Activated CD4-positive, alpha-beta memory T cell treated with anti-CD3 and anti-CD28 coated beads for 36 hours (primary cell): ENCODE measurements at regions of chr2 and their contacts with region 1.

Region 1: DNA sequence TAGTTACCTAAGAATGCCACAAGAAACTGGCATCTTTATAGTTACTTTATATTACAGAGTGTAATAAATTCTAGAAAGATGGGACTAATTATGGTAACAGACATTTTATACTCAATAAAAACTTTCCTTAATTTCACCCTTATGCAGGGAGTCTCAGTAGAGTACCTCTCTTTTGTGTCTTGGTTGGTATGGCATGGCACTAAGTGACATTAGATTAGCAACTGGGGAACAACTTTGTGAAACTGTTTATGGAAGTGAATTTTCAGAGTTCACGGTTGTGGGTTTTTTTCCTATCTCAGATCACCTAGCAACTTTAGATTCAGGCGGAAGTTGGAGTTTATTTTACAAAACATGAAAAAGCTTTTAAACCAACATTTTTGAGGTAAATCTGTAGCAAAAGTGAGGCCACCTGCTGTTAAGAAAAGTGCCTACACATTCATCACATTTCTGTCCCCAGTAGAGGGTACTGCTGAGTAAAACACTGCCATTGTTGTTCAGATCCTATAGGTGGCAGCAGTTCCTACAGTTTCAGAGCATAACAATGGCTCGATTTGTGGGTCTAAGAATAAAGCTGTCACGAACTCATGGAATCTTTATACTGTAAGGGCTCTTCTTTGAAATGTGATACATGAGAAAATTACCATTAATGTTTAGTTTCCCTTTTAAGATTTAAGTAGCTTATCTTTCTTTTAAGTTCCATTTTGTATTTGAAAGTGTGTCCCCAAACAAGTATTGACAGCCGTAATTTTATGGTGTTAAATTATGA is 117.6 kb downstream of the CAMKMT start:
- DNase-seq: peak; percentile 19
- H3K4me3 Mint-ChIP-seq: no peak overlapping the region
- H3K27ac Mint-ChIP-seq: no peak overlapping the region
- H3K4me1 Mint-ChIP-seq: peaks cover 2% of the 10 kb centered on the region
- H3K27me3 Mint-ChIP-seq: no peaks in the 10 kb centered on the region

Region 2: GRCh38 chr2:44087036-44087713 is 392.1 kb before region 1 on chr2:
- CTCF ChIA-PET with region 1: interaction called, 10 read pairs
- POLR2A ChIA-PET with region 1: no interaction called
- intact Hi-C with region 1: no loop called
- DNase-seq: peak; percentile 90
- H3K4me3 Mint-ChIP-seq: peak overlapping the region; percentile 64
- H3K27ac Mint-ChIP-seq: peak overlapping the region; percentile 6
- H3K4me1 Mint-ChIP-seq: peaks cover 11% of the 10 kb centered on the region
- H3K27me3 Mint-ChIP-seq: no peaks in the 10 kb centered on the region

Region 3: DNA sequence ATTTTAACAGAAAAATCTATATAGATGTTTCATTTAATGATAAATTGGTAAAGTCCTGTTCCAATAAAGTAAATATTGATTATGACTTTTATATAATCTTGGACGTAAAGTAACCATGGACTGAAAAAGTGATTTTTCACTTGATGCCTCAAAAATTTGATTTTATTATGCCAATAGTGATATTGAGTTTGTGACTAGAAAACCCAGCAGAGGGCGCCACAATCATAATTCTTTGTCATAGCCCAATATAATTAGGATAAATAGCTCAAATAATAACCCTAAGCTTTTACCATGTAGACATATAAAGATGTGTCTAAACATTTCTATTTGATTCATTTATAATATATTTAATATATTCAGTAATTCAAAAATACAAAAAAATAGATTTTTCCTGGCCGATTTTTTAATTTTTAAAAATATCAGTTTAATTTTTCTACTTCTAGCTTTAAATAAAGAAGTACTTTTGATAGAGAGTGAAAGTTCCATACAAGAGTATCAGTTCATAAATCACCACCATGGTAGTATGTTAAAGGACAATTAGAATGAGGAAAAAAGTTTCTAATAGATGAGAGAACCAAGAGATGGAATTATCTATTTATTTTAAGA is 86.9 kb before region 1 on chr2:
- CTCF ChIA-PET with region 1: interaction called, 13 read pairs
- POLR2A ChIA-PET with region 1: no interaction called
- intact Hi-C with region 1: loop called (anchors 5 kb)
- DNase-seq: peak; percentile 41
- H3K4me3 Mint-ChIP-seq: no peak overlapping the region
- H3K27ac Mint-ChIP-seq: no peak overlapping the region
- H3K4me1 Mint-ChIP-seq: peaks cover 2% of the 10 kb centered on the region
- H3K27me3 Mint-ChIP-seq: no peaks in the 10 kb centered on the region

Region 4: DNA sequence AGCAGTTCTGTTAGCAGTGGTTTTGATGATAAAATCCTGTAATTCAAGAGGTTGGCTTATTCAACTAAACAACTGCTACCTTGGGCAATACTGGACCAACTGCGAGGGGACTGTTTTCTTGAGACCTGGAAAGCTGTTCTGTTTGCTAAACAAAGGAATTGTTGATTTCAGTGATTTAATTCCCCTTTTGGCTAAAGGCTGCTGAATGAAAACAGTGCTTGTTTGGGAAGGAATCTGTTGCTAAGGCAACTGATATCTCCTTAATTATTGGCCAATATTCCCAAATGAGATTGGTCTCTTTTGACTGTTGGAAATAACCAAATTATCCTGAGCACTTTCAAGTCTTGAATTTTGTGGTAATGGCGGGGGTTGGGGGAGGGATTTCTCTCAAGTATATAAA is 19.2 kb after region 1 on chr2:
- CTCF ChIA-PET with region 1: interaction called, 10 read pairs
- POLR2A ChIA-PET with region 1: no interaction called
- intact Hi-C with region 1: no loop called
- DNase-seq: no peak
- H3K4me3 Mint-ChIP-seq: no peak overlapping the region
- H3K27ac Mint-ChIP-seq: no peak overlapping the region
- H3K4me1 Mint-ChIP-seq: no peaks in the 10 kb centered on the region
- H3K27me3 Mint-ChIP-seq: no peaks in the 10 kb centered on the region

Region 5: GRCh38 chr2:44877417-44877816 is 398.1 kb after region 1 on chr2:
- CTCF ChIA-PET with region 1: interaction called, 10 read pairs
- POLR2A ChIA-PET with region 1: no interaction called
- intact Hi-C with region 1: no loop called
- DNase-seq: no peak
- H3K4me3 Mint-ChIP-seq: no peak overlapping the region
- H3K27ac Mint-ChIP-seq: no peak overlapping the region
- H3K4me1 Mint-ChIP-seq: no peaks in the 10 kb centered on the region
- H3K27me3 Mint-ChIP-seq: peaks cover 8% of the 10 kb centered on the region

Region 6: DNA sequence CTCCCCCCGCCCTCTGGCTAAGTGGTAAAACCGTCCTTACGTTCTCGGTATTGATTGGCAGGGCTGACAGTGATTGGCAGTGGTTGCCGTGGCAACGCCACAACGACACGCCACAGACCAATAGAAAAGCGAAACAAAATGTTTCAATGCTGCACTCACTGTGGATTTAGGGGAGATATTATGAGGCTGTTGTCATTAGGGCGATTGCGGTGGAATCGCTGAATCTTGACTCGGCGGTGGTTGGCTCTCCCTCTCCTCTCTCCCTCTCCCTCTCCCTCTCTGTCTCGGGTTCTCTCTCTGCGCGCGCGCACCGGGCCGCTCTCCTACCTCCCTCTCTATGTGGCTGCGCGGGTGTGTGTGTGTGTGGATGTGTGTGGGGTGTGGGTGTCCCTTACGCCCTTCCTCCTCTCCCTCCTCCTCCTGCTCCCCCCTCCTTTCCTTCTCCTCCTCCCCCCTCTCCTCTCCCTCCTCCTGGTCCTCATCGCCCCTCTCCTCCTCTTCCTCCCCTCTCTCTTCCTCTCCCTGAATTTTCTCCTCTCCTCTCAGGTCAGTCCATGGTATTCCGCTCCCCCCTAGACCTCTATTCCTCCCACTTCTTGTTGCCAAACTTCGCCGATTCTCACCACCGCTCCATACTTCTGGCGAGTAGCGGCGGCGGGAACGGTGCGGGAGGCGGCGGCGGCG is 462.4 kb after region 1 on chr2 and contains the start of gene SIX3:
- CTCF ChIA-PET with region 1: interaction called, 10 read pairs
- POLR2A ChIA-PET with region 1: no interaction called
- intact Hi-C with region 1: loop called (anchors 5 kb)
- DNase-seq: peak; percentile 63
- H3K4me3 Mint-ChIP-seq: peak within 1 kb of the TSS; percentile 70
- H3K27ac Mint-ChIP-seq: no peak within 1 kb of the TSS
- H3K4me1 Mint-ChIP-seq: peaks cover 37% of the 10 kb centered on the region
- H3K27me3 Mint-ChIP-seq: peaks cover 75% of the 10 kb centered on the region
- total RNA-seq, gene SIX3: not detected

Region 7: DNA sequence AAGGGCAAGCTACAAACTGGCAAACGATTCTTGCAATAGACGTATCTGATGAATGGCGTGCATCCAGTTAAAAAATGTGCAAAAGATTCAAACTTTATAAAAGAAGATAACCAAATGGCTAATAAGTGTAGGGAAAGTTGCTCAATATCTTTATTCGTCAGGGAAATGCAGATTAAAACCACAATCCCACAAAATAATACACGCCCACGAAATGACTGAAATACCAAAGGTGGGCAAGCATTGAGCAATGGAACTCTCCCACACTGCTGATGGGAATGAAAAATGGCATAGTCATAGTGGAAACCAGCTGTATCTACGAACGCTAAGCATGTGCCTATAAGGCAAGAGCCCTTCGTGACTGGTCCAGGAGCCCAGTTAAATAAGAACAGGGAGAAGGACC is 698.6 kb after region 1 on chr2:
- CTCF ChIA-PET with region 1: no interaction called
- POLR2A ChIA-PET with region 1: no interaction called
- intact Hi-C with region 1: no loop called
- DNase-seq: no peak
- H3K4me3 Mint-ChIP-seq: no peak overlapping the region
- H3K27ac Mint-ChIP-seq: no peak overlapping the region
- H3K4me1 Mint-ChIP-seq: no peaks in the 10 kb centered on the region
- H3K27me3 Mint-ChIP-seq: peaks cover 26% of the 10 kb centered on the region